Activated naive CD4-positive, alpha-beta T cell treated with anti-CD3 and anti-CD28 coated beads for 36 hours (primary cell): ENCODE measurements at regions of chr10 and their contacts with region 1.

Region 1: DNA sequence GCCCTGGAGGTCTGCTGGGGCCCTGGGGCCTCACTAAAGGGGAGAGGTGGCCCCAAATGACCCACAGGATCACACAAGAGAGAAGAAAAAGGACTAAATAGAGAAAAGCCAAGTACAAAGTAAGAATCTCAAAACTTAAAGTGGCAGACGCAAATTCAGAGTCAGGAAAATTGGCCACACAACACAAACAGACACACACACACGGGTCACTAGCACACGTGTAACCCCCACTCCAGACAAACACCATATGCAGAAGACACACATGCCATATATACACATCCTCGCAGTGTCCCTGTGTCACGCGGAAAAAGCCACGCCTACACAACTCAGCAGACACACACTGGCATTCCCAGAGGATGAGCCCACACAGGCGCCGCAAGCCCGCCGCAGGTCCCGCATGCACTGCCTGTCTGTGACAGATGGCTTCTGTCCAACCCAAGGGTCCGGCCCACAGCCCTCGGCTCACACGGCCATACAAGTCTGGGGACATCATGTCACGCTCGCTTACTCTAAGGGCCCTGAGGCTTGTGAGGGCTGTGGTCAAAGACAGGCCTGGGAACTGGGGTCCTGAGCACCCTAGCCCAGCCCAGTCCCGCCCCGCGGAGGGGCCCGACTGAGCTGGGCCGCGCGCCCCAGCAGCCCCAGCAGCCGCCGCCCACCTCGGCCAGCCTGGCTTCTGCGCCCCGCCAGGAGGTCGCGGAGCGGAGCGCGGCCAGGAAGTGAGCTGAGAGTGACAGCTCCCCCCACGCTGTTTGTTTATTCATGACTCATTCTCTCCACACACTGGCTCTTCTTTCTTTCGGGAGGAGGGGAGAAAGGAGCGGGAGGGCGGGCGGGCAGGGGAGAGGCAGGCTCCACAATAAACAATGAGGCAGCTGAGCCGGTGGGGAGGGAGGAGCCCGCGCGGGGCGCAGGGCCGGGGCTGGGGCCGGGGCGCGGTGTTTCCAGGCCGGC is 95.5 kb upstream of the ZMIZ1 start:
- DNase-seq: peak; percentile 80
- H3K4me3 Mint-ChIP-seq: peak overlapping the region; percentile 37
- H3K27ac Mint-ChIP-seq: peak overlapping the region; percentile 8
- H3K4me1 Mint-ChIP-seq: peaks cover 9% of the 10 kb centered on the region
- H3K27me3 Mint-ChIP-seq: no peaks in the 10 kb centered on the region

Region 2: GRCh38 chr10:79038841-79039201 is 65.6 kb after region 1 on chr10:
- CTCF ChIA-PET with region 1: no interaction called
- intact Hi-C with region 1: no loop called
- DNase-seq: no peak
- H3K4me3 Mint-ChIP-seq: no peak overlapping the region
- H3K27ac Mint-ChIP-seq: no peak overlapping the region
- H3K4me1 Mint-ChIP-seq: peaks cover 15% of the 10 kb centered on the region
- H3K27me3 Mint-ChIP-seq: no peaks in the 10 kb centered on the region

Region 3: DNA sequence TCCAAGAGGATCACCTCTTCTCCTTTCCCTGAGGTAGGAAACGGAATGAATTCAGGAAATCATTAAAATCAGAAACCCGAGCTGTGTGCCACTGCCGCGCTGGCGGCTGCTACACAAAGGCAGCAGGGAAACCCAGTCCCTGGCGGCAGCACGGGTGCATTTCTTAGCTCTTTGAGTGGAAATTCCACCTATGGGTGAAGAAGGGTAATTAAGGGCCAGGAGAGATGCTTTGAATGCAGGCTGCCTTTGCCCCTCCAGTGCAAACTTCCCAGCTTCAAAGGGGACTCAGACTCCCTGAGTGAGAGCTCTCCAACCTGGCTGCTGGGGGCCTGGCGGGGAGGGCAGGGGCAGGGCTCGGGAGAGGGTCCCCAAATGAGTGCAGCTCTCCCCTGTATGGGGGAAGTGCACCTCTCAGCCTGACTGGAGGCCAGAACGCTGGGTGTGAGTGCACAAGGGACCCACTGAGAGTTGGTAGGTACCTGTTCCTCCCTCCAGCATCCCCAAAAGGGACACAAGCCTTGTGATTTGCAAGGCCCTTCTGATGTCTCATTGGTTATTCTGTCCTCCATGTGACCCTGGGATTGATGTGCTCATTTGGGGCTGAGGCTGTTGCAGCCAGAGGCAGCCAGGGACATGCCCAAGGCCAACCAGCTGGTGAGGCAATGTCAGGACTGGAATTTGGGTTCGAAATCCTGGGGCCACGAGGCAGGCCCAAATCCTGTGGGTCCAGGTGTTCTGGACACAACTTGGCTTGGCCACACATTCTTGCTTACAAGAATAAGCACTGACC is 79.3 kb after region 1 on chr10:
- CTCF ChIA-PET with region 1: interaction called, 4 read pairs
- intact Hi-C with region 1: loop called (anchors 1 kb)
- DNase-seq: peak; percentile 35
- H3K4me3 Mint-ChIP-seq: no peak overlapping the region
- H3K27ac Mint-ChIP-seq: no peak overlapping the region
- H3K4me1 Mint-ChIP-seq: peaks cover 35% of the 10 kb centered on the region
- H3K27me3 Mint-ChIP-seq: no peaks in the 10 kb centered on the region

Region 4: DNA sequence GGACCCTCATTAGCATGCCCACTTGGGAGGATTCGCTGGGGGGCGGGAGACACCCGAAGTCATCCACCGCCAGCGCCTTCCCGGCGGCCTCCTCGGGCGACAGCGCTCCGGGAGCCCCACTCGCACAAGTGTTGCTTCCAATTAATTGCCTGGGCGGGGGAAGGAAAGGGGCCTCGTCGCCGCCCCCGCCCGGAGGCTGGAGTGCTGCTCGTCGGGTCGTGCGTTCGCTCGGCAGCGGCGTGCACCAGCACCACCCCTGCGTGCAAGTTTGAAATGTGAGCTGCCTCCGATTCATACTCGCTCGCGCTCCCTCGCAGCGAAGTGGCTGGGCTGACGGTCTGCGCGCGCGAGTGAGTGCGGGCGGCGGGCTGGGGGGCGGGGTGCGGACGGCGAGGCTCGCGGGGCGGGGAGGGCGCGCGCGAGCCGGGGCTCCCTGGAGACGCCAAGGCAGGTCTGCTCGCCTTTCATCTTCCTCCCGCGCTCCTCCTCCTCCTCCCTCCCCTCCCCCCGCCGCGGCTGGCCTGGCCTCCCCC is 269.5 kb after region 1 on chr10:
- CTCF ChIA-PET with region 1: no interaction called
- intact Hi-C with region 1: loop called (anchors 2 kb)
- DNase-seq: peak; percentile 69
- H3K4me3 Mint-ChIP-seq: peak overlapping the region; percentile 78
- H3K27ac Mint-ChIP-seq: peak overlapping the region; percentile 56
- H3K4me1 Mint-ChIP-seq: peaks cover 45% of the 10 kb centered on the region
- H3K27me3 Mint-ChIP-seq: no peaks in the 10 kb centered on the region

Region 5: DNA sequence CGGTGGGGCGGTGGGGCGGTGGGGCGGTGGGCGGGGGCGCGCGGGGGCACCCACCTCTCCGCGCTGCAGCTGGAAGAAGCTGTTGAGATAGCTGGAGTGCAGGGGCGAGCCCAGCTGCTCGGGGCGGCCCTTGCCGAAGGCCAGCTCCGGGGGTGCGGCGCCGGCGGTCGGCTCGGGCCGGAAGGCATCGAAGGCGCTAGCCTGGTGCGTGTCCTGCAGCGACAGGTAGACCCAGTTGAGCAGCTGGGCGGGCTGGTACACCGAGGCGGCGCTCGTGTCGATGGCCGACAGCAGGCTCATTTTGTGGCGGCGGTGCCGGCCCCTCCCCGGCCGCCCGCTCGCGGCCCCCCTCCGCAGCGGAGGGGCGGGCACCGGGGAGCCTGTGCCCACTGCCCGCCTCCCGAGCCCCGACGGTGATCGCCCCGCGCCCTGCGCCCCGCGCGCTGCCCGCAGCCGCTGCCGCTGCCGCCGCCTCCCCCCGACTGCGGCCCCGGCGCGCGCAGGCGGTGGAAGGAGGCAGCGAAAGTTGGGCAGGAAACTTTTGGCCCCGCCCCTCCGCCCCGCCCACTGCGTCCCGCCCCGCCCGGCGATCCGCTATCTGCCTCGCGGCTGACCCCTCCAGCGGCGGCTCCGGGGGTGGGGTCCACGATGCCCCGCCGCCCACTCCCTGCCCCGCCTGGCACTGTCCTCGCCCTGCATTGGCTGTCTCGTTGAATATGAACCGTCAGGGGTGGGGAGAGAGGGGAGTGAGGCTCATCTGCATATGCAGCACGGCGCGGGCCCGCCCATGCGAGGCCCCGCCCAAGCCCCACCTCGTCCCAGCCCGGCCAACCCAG is 472.1 kb after region 1 on chr10 and contains the start of gene ZCCHC24:
- CTCF ChIA-PET with region 1: interaction called, 4 read pairs
- intact Hi-C with region 1: loop called (anchors 10 kb)
- DNase-seq: peak; percentile 92
- H3K4me3 Mint-ChIP-seq: peak within 1 kb of the TSS; percentile 70
- H3K27ac Mint-ChIP-seq: no peak within 1 kb of the TSS
- H3K4me1 Mint-ChIP-seq: peaks cover 21% of the 10 kb centered on the region
- H3K27me3 Mint-ChIP-seq: peaks cover 12% of the 10 kb centered on the region
- total RNA-seq, gene ZCCHC24: 0.52 to 0.69 TPM